HepG2 (cell line): ENCODE measurements at regions of chr14 and their contacts with region 1.

Region 1: GRCh38 chr14:22852940-22853767 is 16.8 kb downstream of the MMP14 start:
- DNase-seq: peak; percentile 86
- ATAC-seq: peak; percentile 88
- H3K4me3 ChIP-seq: peak overlapping the region; percentile 43 to 80 (median 57)
- H3K27ac ChIP-seq: no peak overlapping the region
- H3K4me1 ChIP-seq: peaks cover 42% of the 10 kb centered on the region
- H3K27me3 ChIP-seq: peaks cover 7 to 30% of the 10 kb centered on the region in 2 experiments; a peak in 4 of 5 replicates
- CTCF ChIP-seq: peak; percentile 98
- EP300 ChIP-seq: no peak
- POLR2A ChIP-seq: no peak
- RAD21 ChIP-seq: peak; percentile 100

Region 2: DNA sequence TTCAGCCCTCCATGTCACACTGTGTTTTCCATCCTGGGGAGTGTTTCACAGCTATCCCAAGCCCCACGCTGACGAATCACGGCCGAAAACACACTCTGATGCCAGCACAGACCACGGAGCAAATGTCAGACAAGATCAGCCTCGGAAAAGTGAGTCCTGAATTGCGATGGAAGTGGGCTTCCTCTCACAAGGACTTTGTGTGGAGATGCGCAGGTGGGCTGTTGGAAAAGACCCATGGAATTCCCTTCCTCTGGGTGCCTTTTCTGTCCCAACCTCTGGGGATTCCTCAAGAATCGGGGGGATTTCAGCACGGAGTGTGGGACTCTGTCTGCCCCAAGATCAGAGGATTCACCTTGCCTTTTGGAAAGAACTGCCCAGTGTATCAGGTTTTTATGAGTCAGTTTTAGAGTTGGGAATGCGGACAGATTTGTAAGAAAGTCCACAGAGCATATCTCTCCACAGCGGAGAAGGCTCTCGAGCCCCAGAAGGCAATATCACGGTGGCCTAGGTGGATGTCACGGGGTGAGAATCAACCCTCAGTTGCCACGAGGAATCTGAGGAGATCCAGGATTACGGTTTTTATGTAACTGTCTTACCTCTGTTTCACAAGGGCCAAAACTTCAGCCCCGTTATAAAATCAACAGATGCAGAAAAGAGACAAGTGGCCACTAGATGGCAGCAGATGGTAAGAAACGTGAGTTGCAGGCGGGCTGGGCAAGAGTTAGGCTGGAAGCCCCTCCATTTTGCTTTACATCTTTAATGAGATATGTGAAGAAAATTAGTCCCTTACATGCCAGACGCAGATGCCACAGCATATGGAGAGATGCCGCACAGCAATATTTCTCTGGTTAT is 466.0 kb before region 1 on chr14:
- CTCF ChIA-PET with region 1: interaction called, 8 read pairs
- POLR2A ChIA-PET with region 1: no interaction called
- in situ Hi-C with region 1: no loop called
- intact Hi-C with region 1: loop called (anchors 5 kb)
- DNase-seq: peak; percentile 88
- ATAC-seq: peak; percentile 77
- H3K4me3 ChIP-seq: no peak overlapping the region
- H3K27ac ChIP-seq: no peak overlapping the region
- H3K4me1 ChIP-seq: no peaks in the 10 kb centered on the region
- H3K27me3 ChIP-seq: peaks cover 0 to 10% of the 10 kb centered on the region in 2 experiments; a peak in 2 of 5 replicates
- CTCF ChIP-seq: peak; percentile 97
- EP300 ChIP-seq: no peak
- POLR2A ChIP-seq: no peak
- RAD21 ChIP-seq: peak; percentile 84

Region 3: DNA sequence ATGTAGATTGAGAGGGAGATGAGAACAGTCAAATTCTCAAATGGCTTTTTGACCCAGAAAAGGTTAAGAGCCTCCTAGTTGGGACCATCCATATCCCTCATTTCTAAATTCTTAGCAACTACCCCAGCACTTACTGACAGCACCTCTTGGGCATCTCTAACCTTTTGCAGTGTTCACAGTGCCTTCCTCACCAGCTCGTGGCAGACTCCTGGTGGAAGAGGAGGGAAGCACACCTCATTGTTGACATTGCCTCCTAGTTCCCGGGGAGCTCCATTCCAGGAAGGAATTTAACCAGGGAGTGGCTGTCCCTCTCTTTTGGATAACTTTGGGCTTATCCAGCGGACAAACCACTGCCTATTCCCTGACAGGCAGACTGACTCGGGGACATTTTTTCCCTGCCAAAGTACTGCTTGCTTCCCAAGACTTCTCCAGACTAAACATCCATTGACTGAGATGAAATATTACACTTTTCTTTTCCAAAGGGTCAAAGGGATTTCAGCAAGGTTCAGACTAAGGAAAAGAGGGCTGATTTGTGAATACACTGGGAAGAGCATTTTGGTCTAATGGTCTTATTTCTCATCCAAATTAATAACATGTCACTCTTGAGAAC is 200.0 kb before region 1 on chr14:
- CTCF ChIA-PET with region 1: interaction called, 15 read pairs
- POLR2A ChIA-PET with region 1: no interaction called
- in situ Hi-C with region 1: no loop called
- intact Hi-C with region 1: loop called (anchors 1 kb)
- DNase-seq: peak; percentile 86
- ATAC-seq: peak; percentile 98
- H3K4me3 ChIP-seq: no peak overlapping the region
- H3K27ac ChIP-seq: no peak overlapping the region
- H3K4me1 ChIP-seq: 0 out of 2 replicates have a peak, but pooled peaks cover 5% of the 10 kb centered on the region
- H3K27me3 ChIP-seq: peaks cover 3 to 36% of the 10 kb centered on the region in 2 experiments; a peak in 4 of 5 replicates
- CTCF ChIP-seq: peak; percentile 99
- EP300 ChIP-seq: no peak; a peak in 1 of 4 replicates
- POLR2A ChIP-seq: no peak
- RAD21 ChIP-seq: peak; percentile 94

Region 4: DNA sequence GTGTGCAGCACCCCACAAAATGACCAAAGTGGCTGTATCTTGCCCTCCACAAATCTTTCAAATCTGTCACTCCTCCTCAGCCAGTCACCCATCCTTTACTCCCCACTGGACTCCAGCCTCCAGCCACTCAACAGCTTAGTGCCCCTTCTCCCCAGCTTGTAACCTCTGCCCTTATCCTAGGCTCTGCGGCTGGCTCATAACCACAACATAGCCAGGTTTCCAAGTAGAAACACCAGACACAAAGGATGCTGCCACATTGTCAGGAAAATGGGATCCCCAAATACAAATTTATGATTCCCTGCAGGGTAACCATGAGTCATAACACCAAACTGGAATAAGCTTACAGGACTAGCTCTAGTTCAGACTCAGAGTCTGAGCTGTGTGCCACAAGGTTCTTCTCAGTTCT is 71.6 kb before region 1 on chr14:
- CTCF ChIA-PET with region 1: interaction called, 123 read pairs
- POLR2A ChIA-PET with region 1: no interaction called
- in situ Hi-C with region 1: loop called (anchors 10 kb)
- intact Hi-C with region 1: loop called (anchors 1 kb)
- DNase-seq: no peak
- ATAC-seq: no peak
- H3K4me3 ChIP-seq: no peak overlapping the region
- H3K27ac ChIP-seq: no peak overlapping the region
- H3K4me1 ChIP-seq: peaks cover 7% of the 10 kb centered on the region; the same call in 1 of the 2 replicates
- H3K27me3 ChIP-seq: no peaks in the 10 kb centered on the region
- CTCF ChIP-seq: no peak
- EP300 ChIP-seq: no peak
- POLR2A ChIP-seq: no peak
- RAD21 ChIP-seq: no peak

Region 5: DNA sequence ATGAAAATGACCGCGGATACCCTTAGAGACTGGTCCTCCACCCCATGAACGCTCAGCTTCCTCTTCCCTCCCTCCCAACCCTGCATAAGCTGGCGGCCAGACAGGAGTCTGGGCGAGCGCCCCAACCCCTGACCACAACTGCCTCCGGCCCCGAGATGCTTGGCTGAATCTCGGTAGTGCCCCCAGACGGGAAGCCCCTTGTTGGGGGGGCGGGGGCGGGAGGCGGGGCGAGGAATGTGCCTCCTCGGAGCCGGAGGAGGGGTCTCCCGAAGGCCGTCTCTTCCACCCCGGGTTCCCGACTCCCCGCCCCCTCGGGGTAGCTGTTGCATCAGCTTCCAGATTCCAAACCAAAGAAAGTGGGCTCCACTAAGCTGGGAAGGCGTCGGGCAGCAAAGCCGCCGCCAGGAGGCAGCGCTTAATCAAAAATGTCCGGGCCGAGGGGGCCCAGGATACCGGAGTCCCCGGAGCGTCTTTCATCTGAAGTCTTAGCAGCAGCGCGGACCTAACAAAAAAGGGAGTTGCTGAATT is 30.5 kb before region 1 on chr14:
- CTCF ChIA-PET with region 1: interaction called, 141 read pairs
- POLR2A ChIA-PET with region 1: interaction called, 10 read pairs
- in situ Hi-C with region 1: no loop called
- intact Hi-C with region 1: loop called (anchors 1 kb)
- DNase-seq: peak; percentile 78
- ATAC-seq: peak; percentile 70
- H3K4me3 ChIP-seq: peak overlapping the region; percentile 12 to 53 (median 27); a peak in 5 of 6 replicates
- H3K27ac ChIP-seq: no peak overlapping the region
- H3K4me1 ChIP-seq: peaks cover 67% of the 10 kb centered on the region
- H3K27me3 ChIP-seq: 0 out of 5 replicates have a peak, but pooled peaks cover 0 to 3% of the 10 kb centered on the region in 2 experiments
- CTCF ChIP-seq: peak; percentile 93
- EP300 ChIP-seq: 0 out of 4 replicates have a peak, but pooled peaks of 1 of the 2 experiments have one; percentile 19
- POLR2A ChIP-seq: no peak
- RAD21 ChIP-seq: peak; percentile 97

Region 6: GRCh38 chr14:22836301-22837113 is 16.6 kb before region 1 on chr14 and contains the start of gene MMP14:
- CTCF ChIA-PET with region 1: interaction called, 10 read pairs
- POLR2A ChIA-PET with region 1: interaction called, 11 read pairs
- in situ Hi-C with region 1: no loop called
- intact Hi-C with region 1: loop called (anchors 2 kb)
- DNase-seq: no peak
- ATAC-seq: peak; percentile 11
- H3K4me3 ChIP-seq: peak within 1 kb of the TSS; percentile 55 to 71 (median 57)
- H3K27ac ChIP-seq: no peak within 1 kb of the TSS
- H3K4me1 ChIP-seq: peaks cover 43% of the 10 kb centered on the region
- H3K27me3 ChIP-seq: no peaks in the 10 kb centered on the region
- CTCF ChIP-seq: peak; percentile 42; the same call in 1 of the 2 replicates
- EP300 ChIP-seq: no peak
- POLR2A ChIP-seq: 0 out of 4 replicates have a peak, but pooled peaks of 1 of the 2 experiments have one; percentile 8
- RAD21 ChIP-seq: no peak
- total RNA-seq, gene MMP14: 1.6 and 5.2 TPM in 2 replicates

Region 7: DNA sequence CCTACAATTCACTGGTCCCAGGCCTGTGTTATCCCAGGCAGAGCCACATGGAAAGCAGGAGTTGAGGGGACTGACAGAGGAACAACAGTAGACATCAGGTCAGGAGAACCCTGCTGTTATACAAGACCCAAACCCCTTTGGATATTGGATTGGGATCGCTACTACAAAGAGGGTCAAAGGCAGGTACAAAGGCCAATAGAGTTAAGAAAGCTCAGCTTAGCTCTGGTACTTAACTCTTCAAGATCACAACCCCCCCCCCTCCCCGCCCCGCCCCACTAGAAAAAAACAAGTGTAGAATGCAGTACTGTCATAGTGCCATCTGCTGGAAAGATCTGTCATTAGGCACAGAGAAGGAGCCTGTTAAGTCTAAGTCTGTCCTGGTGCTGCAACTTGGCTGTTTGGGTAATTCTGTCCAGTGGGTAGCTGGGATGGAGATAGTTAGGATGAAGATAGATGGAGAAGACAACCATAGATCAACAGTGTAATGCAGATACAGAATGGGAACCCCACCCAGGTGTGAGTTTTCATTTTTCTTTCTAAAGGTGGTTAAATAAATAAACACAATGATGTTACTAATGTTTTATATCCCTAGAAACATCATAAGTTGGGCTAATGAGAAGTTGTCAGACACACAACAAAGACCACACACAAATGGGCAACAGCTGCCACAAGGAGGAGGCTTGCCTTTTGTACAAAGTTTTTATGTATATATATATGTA is 47.1 kb after region 1 on chr14:
- CTCF ChIA-PET with region 1: interaction called, 17 read pairs
- POLR2A ChIA-PET with region 1: no interaction called
- in situ Hi-C with region 1: no loop called
- intact Hi-C with region 1: loop called (anchors 1 kb)
- DNase-seq: peak; percentile 83
- ATAC-seq: peak; percentile 39
- H3K4me3 ChIP-seq: no peak overlapping the region
- H3K27ac ChIP-seq: no peak overlapping the region
- H3K4me1 ChIP-seq: peaks cover 45% of the 10 kb centered on the region
- H3K27me3 ChIP-seq: peaks cover 4 to 6% of the 10 kb centered on the region in 2 experiments; a peak in 2 of 5 replicates
- CTCF ChIP-seq: peak; percentile 87
- EP300 ChIP-seq: no peak
- POLR2A ChIP-seq: no peak
- RAD21 ChIP-seq: peak; percentile 56; the same call in 1 of the 2 replicates

Region 8: DNA sequence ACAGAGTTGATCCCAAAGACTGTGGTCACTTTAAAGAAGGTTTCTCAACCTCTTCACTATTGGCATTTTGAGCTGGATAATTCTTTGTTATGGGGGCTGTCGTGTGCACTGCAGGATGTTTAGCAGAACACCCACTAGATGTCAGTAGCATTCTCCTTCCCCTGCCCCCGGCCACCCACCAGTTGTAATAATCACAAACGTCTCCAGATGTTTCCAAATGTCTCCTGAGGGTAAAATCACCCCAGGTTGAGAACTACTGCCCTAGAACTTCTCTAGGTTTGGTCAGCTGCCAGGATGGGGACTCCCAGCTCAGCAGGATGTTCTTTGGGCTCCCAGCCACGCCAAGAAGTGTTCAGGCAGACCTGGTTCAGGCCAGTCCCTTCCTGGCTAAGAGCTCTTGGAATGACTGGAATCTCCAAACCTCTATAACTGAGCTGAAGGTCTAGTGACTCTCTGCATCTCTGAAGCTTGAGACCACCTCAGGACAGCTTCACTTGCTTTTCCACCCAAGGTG is 141.7 kb after region 1 on chr14:
- CTCF ChIA-PET with region 1: no interaction called
- POLR2A ChIA-PET with region 1: no interaction called
- in situ Hi-C with region 1: no loop called
- intact Hi-C with region 1: no loop called
- DNase-seq: peak; percentile 67
- ATAC-seq: peak; percentile 94
- H3K4me3 ChIP-seq: no peak overlapping the region
- H3K27ac ChIP-seq: no peak overlapping the region
- H3K4me1 ChIP-seq: peaks cover 5% of the 10 kb centered on the region; the same call in 1 of the 2 replicates
- H3K27me3 ChIP-seq: no peaks in the 10 kb centered on the region
- CTCF ChIP-seq: peak; percentile 90
- EP300 ChIP-seq: no peak
- POLR2A ChIP-seq: no peak
- RAD21 ChIP-seq: peak; percentile 87

Region 9: GRCh38 chr14:23409475-23409874 is 556.3 kb after region 1 on chr14:
- CTCF ChIA-PET with region 1: no interaction called
- POLR2A ChIA-PET with region 1: no interaction called
- in situ Hi-C with region 1: no loop called
- intact Hi-C with region 1: no loop called
- DNase-seq: no peak
- ATAC-seq: no peak
- H3K4me3 ChIP-seq: no peak overlapping the region
- H3K27ac ChIP-seq: no peak overlapping the region
- H3K4me1 ChIP-seq: no peaks in the 10 kb centered on the region
- H3K27me3 ChIP-seq: peaks cover 52 to 100% of the 10 kb centered on the region in 2 experiments
- CTCF ChIP-seq: no peak
- EP300 ChIP-seq: no peak
- POLR2A ChIP-seq: no peak
- RAD21 ChIP-seq: no peak